Activated naive CD4-positive, alpha-beta T cell treated with anti-CD3 and anti-CD28 coated beads, Interleukin-2, amount 10 ng/mL, durations not matched to agents 7 days and 5 days (primary cell): ENCODE measurements at regions of chr12 and their contacts with region 1.

Region 1: GRCh38 chr12:4604684-4605193 is 42.7 kb downstream of the DYRK4 start:
- DNase-seq: peak; percentile 87
- H3K4me3 Mint-ChIP-seq: peak overlapping the region; percentile 95
- H3K27ac Mint-ChIP-seq: peak overlapping the region; percentile 85
- H3K4me1 Mint-ChIP-seq: peaks cover 12% of the 10 kb centered on the region
- H3K27me3 Mint-ChIP-seq: peaks cover 15% of the 10 kb centered on the region

Region 2: DNA sequence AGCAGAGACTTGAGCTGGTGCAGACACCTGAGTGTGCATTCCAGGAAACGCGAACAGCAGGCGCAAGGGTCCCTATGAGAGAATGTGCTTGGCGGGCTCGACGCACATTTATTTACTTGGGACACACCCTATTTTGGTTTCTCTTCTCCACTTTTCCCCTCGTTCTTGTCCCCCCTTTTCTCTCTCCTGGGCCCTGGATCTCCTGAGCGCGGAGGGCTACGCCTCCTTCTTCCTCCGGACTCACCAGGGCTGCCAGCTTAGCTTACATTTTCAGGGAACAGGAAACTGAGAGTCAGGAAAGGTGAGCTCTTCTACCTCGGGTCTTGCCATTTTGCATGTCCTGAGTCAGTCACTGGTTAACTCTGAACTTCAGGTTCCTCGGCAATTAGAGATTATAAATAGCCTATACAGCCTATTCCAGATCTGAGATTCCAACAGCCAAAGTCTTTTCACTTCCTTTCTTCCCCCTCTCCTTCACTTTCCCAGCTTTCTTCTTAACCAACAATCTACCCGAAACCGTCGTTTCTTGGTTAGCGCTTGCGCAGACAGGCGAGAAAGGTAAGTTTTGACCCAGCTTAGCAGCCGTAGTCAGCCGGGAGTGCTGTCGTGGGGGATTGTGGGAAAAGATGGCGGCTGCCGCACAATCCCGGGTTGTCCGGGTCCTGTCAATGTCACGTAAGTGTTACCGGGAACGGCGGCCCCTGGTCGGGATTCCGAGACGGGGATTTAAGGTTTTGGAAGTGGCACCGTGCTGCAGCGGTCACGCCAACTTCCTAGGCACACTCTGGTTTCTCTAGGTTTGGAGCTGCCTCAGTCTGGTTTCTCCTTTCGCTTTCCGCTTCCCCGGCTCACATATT is 44.0 kb after region 1 on chr12 and contains the starts of genes AKAP3 and NDUFA9:
- CTCF ChIA-PET with region 1: interaction called, 11 read pairs
- DNase-seq: peak; percentile 88
- H3K4me3 Mint-ChIP-seq: peak within 1 kb of the TSS; percentile 98
- H3K27ac Mint-ChIP-seq: peak within 1 kb of the TSS; percentile 92
- H3K4me1 Mint-ChIP-seq: peaks cover 49% of the 10 kb centered on the region
- H3K27me3 Mint-ChIP-seq: peaks cover 3% of the 10 kb centered on the region